ENCODE measurements at regions of chr4 and their contacts with region 1.

Region 1: DNA sequence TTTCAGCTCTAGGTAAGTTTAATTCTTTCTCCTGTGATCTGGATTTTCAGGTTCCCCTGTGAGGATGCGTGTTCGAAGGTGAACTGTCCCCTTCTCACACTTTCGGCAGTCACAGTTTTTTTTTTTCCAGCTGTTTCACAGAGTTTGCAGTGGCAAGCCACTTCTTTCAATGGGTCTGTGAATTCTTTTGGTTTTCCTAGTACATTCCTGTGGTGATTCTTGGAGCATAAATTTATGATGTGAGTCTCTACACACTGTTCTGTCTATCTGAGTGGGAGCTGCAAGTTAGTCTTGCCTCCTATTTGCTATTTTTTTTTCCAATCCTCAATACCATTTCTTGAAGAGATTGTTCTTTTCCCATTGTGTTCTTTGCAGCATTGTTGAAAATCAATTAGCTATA is 595.5 kb downstream of the RAPGEF2 start:
- DNase-seq: no peak

Region 2: DNA sequence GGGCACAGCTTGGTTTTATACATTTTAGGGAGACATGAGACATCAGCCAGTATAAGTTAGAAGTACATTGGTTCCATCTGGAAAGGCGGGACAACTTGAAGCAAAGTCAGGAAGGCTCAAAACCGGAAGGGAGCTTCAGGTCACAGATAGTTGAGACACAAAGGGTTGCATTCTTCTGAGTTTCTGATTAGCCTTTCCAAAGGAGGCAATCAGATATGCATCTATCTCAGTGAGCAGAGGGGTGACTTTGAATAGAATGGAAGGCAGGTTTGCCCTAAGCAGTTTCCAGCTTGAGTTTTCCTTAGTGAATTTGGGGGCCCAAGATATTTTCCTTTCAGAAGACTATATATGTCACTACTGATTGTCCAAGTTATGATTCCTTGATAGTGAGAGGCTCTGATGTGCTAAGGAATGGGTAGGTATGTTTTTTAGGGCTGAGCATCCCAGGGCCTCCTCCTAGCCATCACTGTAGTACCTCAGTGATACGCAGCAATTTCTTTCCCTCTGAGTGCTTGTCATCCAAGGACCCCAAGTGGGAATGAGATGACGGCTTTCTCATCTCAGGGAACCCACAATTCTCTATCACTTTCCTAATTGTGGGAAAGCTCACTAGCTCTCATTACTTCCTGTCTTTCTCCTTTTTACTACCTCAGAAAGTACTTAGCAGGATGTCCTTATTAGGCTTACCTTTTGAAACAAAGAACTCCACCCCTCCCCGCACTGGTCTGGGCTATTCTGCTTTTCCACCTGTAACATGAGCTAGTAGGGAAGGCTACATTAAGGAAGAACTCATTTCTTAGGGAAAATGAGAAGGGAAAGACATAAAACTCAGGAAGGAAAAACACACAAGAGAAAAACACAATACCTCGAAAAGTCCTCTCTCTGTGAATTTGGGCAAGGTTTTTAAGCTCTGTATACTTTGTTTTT is 37.2 kb after region 1 on chr4:
- intact Hi-C with region 1: loop called in 1 of 2 experiments (anchors 1 kb)
- DNase-seq: no peak

Region 3: DNA sequence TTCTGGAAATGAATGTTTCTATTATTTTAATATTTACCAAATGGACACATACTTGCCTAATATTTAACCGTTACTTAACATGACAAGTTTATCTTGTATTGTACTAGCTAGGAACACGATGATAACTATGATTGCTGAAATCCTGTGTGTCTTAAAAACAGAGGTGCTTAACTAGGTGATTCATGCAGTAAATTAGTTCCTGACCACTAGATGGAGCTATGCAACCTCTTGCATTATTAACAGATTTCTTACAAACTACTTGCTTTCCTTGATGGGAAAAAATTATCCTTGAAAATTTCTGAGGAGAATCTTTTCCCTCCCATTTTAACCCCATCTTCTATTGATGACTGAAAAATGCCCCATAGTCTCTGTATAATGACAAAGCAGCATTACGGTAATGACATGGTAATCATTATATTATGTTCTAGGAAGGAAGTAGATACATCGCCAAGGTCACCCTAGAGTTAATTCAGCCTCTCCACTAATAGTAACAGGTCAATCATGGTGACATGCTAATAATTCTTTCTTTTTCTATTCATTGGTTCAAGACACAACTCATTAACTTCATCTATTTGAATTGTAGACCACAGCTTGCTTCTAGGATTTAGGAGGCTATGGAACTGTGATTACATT is 248.8 kb after region 1 on chr4:
- intact Hi-C with region 1: no loop called
- DNase-seq: no peak

Measured in posterior vena cava (tissue), 2 donors.